Activated naive CD8-positive, alpha-beta T cell treated with anti-CD3 and anti-CD28 coated beads, Interleukin-2, amount 10 ng/mL, durations not matched to agents 7 days and 5 days (primary cell): ENCODE measurements at regions of chr1 and their contacts with region 1.

Region 1: GRCh38 chr1:28505406-28506187 is at the start of gene RCC1:
- DNase-seq: peak; percentile 89
- ATAC-seq: peak; percentile 85
- H3K4me3 Mint-ChIP-seq: peak within 1 kb of the TSS; percentile 99
- H3K27ac Mint-ChIP-seq: peak within 1 kb of the TSS; percentile 99
- H3K4me1 Mint-ChIP-seq: peaks cover 27% of the 10 kb centered on the region
- H3K27me3 Mint-ChIP-seq: no peaks in the 10 kb centered on the region
- total RNA-seq, gene RCC1: 46.2 to 51.7 TPM

Region 2: GRCh38 chr1:28329395-28330153 is 176.0 kb before region 1 on chr1:
- POLR2A ChIA-PET with region 1: interaction called, 11 read pairs
- DNase-seq: peak; percentile 68
- ATAC-seq: peak; percentile 6
- H3K4me3 Mint-ChIP-seq: peak overlapping the region; percentile 97
- H3K27ac Mint-ChIP-seq: peak overlapping the region; percentile 96
- H3K4me1 Mint-ChIP-seq: peaks cover 32% of the 10 kb centered on the region
- H3K27me3 Mint-ChIP-seq: no peaks in the 10 kb centered on the region

Region 3: GRCh38 chr1:28480308-28480707 is 25.3 kb before region 1 on chr1:
- POLR2A ChIA-PET with region 1: no interaction called
- DNase-seq: no peak
- ATAC-seq: no peak
- H3K4me3 Mint-ChIP-seq: no peak overlapping the region
- H3K27ac Mint-ChIP-seq: no peak overlapping the region
- H3K4me1 Mint-ChIP-seq: no peaks in the 10 kb centered on the region
- H3K27me3 Mint-ChIP-seq: no peaks in the 10 kb centered on the region

Region 4: DNA sequence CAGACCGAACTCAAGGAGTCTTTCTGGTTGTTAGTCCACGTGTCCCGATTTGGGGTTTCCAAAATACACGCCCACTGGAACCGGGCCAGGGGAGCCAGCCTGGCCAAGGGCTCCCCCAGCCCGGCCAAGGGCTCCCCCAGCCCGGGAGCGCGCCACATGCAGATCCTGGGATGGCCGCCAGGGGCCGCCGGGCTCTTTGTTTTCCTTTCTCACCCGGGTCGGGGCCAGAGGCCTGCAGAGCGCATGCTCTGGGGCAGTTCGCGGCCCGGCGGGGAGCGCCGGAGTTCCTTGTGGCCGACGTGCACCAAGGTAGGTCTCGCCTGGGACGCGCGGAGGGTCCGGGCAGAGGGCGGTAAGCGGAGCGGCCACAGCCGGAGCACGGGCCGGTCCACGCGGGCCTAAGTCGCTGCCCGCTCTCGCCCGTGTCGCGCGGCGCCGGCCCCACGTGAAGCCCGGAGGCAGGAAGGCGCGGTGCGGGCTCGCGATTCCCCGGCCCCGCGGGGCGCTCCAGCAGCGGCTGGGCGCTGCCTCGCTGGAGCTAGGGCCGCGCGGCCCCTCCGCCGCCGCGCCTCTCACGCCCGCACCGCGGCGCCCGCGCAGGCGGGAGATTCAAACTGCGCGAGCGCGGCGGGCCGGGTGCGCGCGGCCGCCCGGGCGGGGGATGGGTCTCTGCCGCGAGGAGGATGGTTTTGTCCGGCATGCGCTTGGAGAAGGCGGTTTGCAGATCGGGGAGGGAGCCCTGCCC is 12.6 kb after region 1 on chr1:
- POLR2A ChIA-PET with region 1: interaction called, 40 read pairs
- DNase-seq: peak; percentile 93
- ATAC-seq: peak; percentile 84
- H3K4me3 Mint-ChIP-seq: peak overlapping the region; percentile 98
- H3K27ac Mint-ChIP-seq: peak overlapping the region; percentile 92
- H3K4me1 Mint-ChIP-seq: peaks cover 32% of the 10 kb centered on the region
- H3K27me3 Mint-ChIP-seq: no peaks in the 10 kb centered on the region

Region 5: GRCh38 chr1:28552758-28553663 is 47.4 kb after region 1 on chr1 and contains the start of gene TRNAU1AP:
- POLR2A ChIA-PET with region 1: interaction called, 12 read pairs
- DNase-seq: peak; percentile 98
- ATAC-seq: peak; percentile 95
- H3K4me3 Mint-ChIP-seq: peak within 1 kb of the TSS; percentile 93
- H3K27ac Mint-ChIP-seq: peak within 1 kb of the TSS; percentile 96
- H3K4me1 Mint-ChIP-seq: peaks cover 20% of the 10 kb centered on the region
- H3K27me3 Mint-ChIP-seq: no peaks in the 10 kb centered on the region
- total RNA-seq, gene TRNAU1AP: 54.2 to 58.9 TPM

Region 6: GRCh38 chr1:28642847-28643635 is 137.4 kb after region 1 on chr1 and contains the start of gene TAF12:
- POLR2A ChIA-PET with region 1: interaction called, 12 read pairs
- DNase-seq: peak; percentile 90
- ATAC-seq: peak; percentile 86
- H3K4me3 Mint-ChIP-seq: peak within 1 kb of the TSS; percentile 98
- H3K27ac Mint-ChIP-seq: peak within 1 kb of the TSS; percentile 99
- H3K4me1 Mint-ChIP-seq: peaks cover 37% of the 10 kb centered on the region
- H3K27me3 Mint-ChIP-seq: no peaks in the 10 kb centered on the region
- total RNA-seq, gene TAF12: 29.9 to 30.5 TPM